ENCODE measurements at regions of chr2 and their contacts with region 1.

Region 1: DNA sequence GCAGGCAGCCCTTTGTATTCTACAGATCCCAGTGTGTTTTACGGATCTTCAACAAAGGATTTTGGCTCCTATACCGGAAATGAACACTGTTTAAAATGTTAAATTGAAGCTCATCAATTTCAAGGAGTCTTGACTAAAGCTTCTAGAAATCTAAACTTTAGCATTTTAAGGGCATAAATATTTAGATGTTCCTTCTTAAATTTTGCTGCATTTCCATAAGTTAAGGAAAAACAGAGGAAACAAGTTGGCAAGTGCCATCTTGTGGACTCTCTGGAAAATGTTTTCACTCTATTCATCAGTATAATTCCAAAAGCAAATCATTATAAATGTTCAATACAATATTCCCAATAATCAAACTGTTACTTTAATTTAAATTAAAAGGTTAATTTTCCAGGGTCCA is 19.6 kb downstream of the CHN1 start:
- DNase-seq: no peak
- H3K4me3 Mint-ChIP-seq: no peak overlapping the region
- H3K27ac Mint-ChIP-seq: no peak overlapping the region
- H3K4me1 Mint-ChIP-seq: peaks cover 2% of the 10 kb centered on the region
- H3K27me3 Mint-ChIP-seq: peaks cover 19% of the 10 kb centered on the region

Region 2: GRCh38 chr2:174697255-174697654 is 288.4 kb before region 1 on chr2:
- intact Hi-C with region 1: loop called (anchors 2 kb)
- DNase-seq: peak; percentile 89
- H3K4me3 Mint-ChIP-seq: no peak overlapping the region
- H3K27ac Mint-ChIP-seq: no peak overlapping the region
- H3K4me1 Mint-ChIP-seq: peaks cover 6% of the 10 kb centered on the region
- H3K27me3 Mint-ChIP-seq: peaks cover 35% of the 10 kb centered on the region

Region 3: GRCh38 chr2:174771631-174772471 is 213.8 kb before region 1 on chr2:
- intact Hi-C with region 1: loop called (anchors 1 kb)
- DNase-seq: peak; percentile 81
- H3K4me3 Mint-ChIP-seq: no peak overlapping the region
- H3K27ac Mint-ChIP-seq: no peak overlapping the region
- H3K4me1 Mint-ChIP-seq: peaks cover 21% of the 10 kb centered on the region
- H3K27me3 Mint-ChIP-seq: peaks cover 10% of the 10 kb centered on the region

Region 4: GRCh38 chr2:175010848-175011254 is 25.2 kb after region 1 on chr2:
- intact Hi-C with region 1: no loop called
- DNase-seq: no peak
- H3K4me3 Mint-ChIP-seq: no peak overlapping the region
- H3K27ac Mint-ChIP-seq: no peak overlapping the region
- H3K4me1 Mint-ChIP-seq: peaks cover 3% of the 10 kb centered on the region
- H3K27me3 Mint-ChIP-seq: peaks cover 45% of the 10 kb centered on the region

Region 5: GRCh38 chr2:175929850-175930249 is 944.2 kb after region 1 on chr2:
- intact Hi-C with region 1: no loop called
- DNase-seq: no peak
- H3K4me3 Mint-ChIP-seq: no peak overlapping the region
- H3K27ac Mint-ChIP-seq: no peak overlapping the region
- H3K4me1 Mint-ChIP-seq: peaks cover 7% of the 10 kb centered on the region
- H3K27me3 Mint-ChIP-seq: no peaks in the 10 kb centered on the region

Measured in activated CD4-positive, alpha-beta T cell treated with anti-CD3 and anti-CD28 coated beads, Interleukin-2, amount 10 ng/mL, durations not matched to agents 24 days and 14 days (primary cell).